GM18951 (cell line): ENCODE measurements at regions of chr1 and their contacts with region 1.

Region 1: DNA sequence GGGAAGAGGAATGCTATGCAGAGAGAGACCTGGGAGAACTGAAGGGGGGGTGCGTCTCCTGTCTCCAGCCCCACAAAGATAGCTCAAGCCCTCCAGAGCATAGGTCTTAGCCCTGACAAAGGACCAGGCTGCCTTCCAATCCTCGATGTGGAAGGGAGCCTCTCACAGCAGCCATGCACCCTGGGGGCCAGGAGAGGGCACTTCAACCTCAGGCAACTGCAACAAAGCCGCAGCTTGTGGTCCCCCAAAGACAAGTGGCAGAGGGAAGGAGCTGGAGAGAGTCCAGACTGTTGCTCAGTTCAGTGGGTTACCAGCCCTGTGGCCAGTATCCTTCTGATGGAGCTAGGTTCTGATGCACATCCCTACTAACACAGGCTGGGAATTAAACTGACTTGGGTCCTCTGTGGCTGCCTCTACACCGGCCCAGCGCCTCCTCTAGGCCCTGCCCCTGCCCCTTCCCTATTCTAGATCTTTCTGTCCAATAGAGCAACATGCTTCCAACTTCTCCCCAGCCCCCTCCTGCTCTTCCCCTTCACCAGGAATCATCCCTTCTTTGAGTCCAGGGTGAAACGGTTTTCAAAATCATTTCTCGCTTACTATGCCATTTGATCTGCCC is 100.8 kb upstream of the SPATA6 start:
- POLR2A ChIP-seq: no peak

Region 2: GRCh38 chr1:48688102-48688760 is 115.5 kb after region 1 on chr1:
- in situ Hi-C with region 1: loop called (anchors 10 kb)
- POLR2A ChIP-seq: no peak

Region 3: GRCh38 chr1:48823168-48823567 is 250.4 kb after region 1 on chr1:
- in situ Hi-C with region 1: loop called (anchors 10 kb)
- POLR2A ChIP-seq: no peak